Activated B cell treated with CpG ODN at 0.5 μM for 24 hours (primary cell): ENCODE measurements at regions of chr1 and their contacts with region 1.

Region 1: DNA sequence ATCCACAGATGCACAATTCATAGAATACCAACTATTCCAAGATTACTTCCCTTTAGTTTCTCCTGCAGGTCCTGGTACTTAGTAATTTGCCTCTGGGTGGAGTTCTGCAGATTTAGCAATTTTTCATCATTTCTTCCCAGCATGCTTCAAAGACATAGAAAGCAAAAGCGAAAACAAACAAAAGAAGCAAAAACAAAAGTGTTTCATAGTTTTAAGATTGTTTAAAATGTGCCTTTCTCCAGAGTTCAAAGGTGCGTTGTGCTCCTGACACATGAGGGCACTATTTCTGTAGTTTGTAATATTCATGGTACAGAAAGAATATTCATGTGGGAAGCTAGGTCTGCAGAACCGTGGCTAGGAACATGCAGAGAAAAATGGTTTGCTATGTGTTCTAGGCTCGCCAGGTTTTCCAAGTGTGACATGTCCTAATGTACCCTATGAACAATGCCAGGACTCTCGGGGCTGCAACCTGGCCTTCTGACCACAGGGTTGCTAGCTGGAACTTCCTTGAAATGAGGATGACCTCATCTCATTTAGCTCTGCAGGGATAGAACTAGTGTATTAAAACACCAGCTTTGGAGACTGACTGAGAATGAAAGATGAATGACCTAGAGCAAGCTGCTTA is 30.0 kb upstream of the RCSD1 start:
- DNase-seq: no peak
- ATAC-seq: peak; percentile 66
- H3K4me3 Mint-ChIP-seq: peak overlapping the region; percentile 48
- H3K27ac Mint-ChIP-seq: peak overlapping the region; percentile 7
- H3K4me1 Mint-ChIP-seq: peaks cover 43% of the 10 kb centered on the region
- H3K27me3 Mint-ChIP-seq: no peaks in the 10 kb centered on the region
- CTCF ChIP-seq: peak; percentile 56

Region 2: DNA sequence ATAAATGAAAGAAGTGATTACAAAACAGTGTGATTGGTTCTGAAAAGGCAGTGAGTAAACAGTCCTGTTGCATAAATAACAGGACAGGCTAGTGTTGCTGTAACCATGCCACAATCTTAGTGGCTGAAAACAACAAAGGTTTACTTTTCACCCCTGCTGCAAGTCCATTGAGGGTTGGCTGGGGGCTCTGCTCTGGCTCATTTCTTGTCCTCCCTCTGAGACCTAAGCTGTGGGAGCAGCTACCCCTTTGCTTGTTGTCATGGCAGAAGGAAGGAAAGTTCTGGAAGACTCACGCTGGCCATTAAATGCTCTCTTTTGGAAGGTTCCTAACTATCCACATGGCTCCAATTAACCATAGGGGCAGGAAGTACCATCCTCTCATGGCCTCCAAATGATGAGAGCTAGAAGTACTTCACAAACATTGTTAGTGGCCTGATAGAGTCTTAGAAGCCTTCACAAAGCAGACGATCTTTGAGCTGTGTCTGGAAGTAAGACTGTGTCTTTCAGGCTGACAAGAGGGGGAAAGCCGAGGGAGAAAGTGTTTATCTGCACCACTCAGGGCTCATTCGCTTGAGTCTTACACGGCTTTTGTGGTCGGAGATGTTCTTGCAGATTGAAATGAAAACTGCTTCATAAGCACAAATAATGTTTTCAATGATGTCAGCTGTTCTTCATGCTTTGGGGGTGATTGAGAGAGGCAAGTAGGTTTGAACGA is 41.9 kb after region 1 on chr1:
- CTCF ChIA-PET with region 1: interaction called, 229 read pairs
- POLR2A ChIA-PET with region 1: interaction called, 321 read pairs
- intact Hi-C with region 1: loop called (anchors 1 kb)
- DNase-seq: no peak
- ATAC-seq: no peak
- H3K4me3 Mint-ChIP-seq: no peak overlapping the region
- H3K27ac Mint-ChIP-seq: peak overlapping the region; percentile 10
- H3K4me1 Mint-ChIP-seq: peaks cover 99% of the 10 kb centered on the region
- H3K27me3 Mint-ChIP-seq: no peaks in the 10 kb centered on the region
- CTCF ChIP-seq: no peak

Region 3: DNA sequence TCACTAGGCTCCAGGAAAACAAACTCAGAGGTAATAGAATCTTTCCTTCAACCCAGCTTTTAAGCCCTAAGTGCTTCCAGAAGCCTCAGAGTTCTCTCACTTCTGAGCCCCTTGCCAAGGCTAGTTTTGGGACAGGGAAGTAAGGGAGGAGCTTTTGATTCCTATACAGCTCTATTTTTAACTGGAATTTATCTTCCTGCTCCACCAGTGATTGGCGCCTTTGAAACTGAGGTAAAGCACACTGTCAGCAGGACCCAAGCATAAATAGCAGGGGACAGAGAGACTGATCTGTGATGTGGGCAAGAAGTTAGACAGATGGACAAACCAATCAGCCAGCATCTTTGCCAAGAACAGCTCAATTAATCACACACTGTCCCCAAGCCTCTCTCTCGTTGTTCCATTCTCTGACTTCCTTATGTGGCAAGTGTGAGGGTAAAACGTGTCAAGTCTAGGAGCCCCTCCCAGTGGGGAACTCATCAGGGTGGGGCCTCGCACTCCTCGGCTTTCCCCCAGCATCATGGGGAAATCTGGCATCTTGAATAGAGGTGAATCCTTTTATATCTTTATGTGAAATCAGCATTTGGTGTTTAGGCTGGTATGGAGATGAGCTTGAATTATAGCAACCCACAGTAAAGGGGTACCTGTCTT is 81.5 kb after region 1 on chr1:
- CTCF ChIA-PET with region 1: interaction called, 197 read pairs
- POLR2A ChIA-PET with region 1: interaction called, 44 read pairs
- intact Hi-C with region 1: no loop called
- DNase-seq: no peak
- ATAC-seq: no peak
- H3K4me3 Mint-ChIP-seq: peak overlapping the region; percentile 25
- H3K27ac Mint-ChIP-seq: no peak overlapping the region
- H3K4me1 Mint-ChIP-seq: peaks cover 16% of the 10 kb centered on the region
- H3K27me3 Mint-ChIP-seq: no peaks in the 10 kb centered on the region
- CTCF ChIP-seq: no peak

Region 4: GRCh38 chr1:167708940-167709389 is 108.9 kb after region 1 on chr1:
- CTCF ChIA-PET with region 1: interaction called, 12 read pairs
- POLR2A ChIA-PET with region 1: interaction called, 12 read pairs
- intact Hi-C with region 1: no loop called
- DNase-seq: peak; percentile 53
- ATAC-seq: peak; percentile 72
- H3K4me3 Mint-ChIP-seq: peak overlapping the region; percentile 77
- H3K27ac Mint-ChIP-seq: peak overlapping the region; percentile 89
- H3K4me1 Mint-ChIP-seq: peaks cover 84% of the 10 kb centered on the region
- H3K27me3 Mint-ChIP-seq: no peaks in the 10 kb centered on the region
- CTCF ChIP-seq: no peak

Region 5: DNA sequence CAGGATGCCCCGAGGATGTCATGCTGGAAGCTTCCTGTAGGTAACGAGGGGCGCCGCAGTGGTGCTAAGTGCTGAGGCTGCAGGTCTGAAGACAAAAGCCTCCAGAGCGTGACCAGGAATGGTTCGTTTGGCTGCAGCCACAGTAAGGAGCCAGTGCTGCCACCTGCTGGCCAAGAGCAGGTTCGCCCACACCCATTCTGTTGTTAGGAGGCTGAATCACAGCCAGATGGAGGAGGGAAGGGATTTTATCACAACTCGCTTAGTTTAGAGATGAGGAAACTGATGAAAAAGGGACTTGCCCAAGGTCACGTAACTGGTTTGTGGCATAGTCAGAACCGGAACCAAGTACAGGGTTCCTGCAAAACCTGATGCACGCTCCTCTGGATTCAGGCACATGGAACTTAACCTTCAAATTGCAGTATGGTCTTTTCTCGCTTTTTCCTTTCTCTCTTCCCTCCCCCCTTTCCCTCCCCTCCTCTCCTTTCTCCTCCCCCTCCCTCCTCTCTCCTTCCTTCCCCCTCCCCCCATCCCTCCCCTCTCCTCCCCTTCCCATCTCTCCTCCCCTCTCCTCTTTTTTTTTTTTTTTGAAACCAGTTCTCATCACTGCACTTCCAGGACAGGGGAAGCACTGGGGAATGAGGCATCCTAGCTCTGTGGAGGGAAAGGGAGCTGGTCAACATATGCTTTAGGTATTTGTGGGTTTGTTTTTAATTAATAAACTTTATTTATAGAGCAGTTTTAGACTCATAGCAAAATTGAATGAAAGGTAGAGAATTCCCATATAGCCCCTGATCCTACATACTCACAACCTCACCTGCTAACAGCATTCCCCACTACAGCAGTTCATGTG is 203.5 kb after region 1 on chr1:
- CTCF ChIA-PET with region 1: interaction called, 5 read pairs
- POLR2A ChIA-PET with region 1: no interaction called
- intact Hi-C with region 1: loop called (anchors 1 kb)
- DNase-seq: peak; percentile 79
- ATAC-seq: peak; percentile 100
- H3K4me3 Mint-ChIP-seq: peak overlapping the region; percentile 48
- H3K27ac Mint-ChIP-seq: no peak overlapping the region
- H3K4me1 Mint-ChIP-seq: peaks cover 22% of the 10 kb centered on the region
- H3K27me3 Mint-ChIP-seq: no peaks in the 10 kb centered on the region
- CTCF ChIP-seq: peak; percentile 54

Region 6: GRCh38 chr1:167984886-167985489 is 384.9 kb after region 1 on chr1:
- CTCF ChIA-PET with region 1: no interaction called
- POLR2A ChIA-PET with region 1: no interaction called
- intact Hi-C with region 1: no loop called
- DNase-seq: no peak
- ATAC-seq: no peak
- H3K4me3 Mint-ChIP-seq: no peak overlapping the region
- H3K27ac Mint-ChIP-seq: no peak overlapping the region
- H3K4me1 Mint-ChIP-seq: no peaks in the 10 kb centered on the region
- H3K27me3 Mint-ChIP-seq: no peaks in the 10 kb centered on the region
- CTCF ChIP-seq: no peak